ENCODE measurements at regions of chr16 and their contacts with region 1.

Region 1: GRCh38 chr16:4624015-4624826 is at the start of gene MGRN1:
- DNase-seq: peak; percentile 95
- ATAC-seq: peak; percentile 99
- total RNA-seq, gene MGRN1: 32.2 TPM

Region 2: DNA sequence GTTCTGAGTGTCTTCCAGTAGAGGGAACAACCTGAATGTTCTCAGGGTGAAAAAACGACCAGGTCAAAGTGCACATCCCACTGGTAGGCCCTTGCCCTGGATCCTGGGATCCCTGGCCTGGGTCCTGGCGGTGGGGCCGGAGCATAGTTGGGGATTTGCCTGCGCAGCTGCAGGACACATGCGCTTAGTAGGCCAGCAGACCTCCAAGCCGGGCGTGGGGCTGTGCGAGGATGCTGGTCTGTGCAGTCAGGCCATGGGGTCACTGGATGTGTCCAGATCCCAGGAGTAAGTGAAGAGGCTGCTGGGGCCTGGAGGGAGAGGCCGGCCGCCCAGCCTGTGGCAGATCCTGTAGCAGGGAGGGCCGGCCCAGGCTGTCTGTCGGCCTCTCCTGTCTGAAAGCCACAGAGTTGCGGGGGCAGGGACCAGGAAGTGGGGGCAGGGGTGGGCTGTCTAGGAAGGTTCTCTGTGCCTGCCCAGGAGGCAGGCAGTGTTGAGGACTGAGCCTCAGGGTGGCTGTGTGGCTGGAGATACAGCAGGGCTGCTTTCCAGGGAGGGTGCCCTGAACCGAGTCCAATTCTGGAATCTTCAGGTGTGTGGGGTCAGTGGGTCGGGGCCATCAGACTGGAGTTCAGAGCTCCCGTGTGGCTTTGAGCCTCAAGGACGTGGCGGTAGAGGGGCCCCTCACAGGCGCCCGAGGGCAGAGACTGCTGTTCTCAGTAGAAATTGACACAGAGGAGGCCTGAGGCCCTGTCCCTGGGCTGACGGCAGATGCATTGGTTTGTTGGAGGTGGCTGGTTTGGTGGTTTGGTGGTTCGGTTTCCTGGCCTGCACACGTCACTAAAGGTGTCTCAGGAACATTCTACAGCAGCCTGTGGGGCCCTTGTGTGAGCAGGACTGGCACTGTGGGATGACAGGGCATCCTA is 51.9 kb after region 1 on chr16:
- intact Hi-C with region 1: loop called (anchors 2 kb)
- DNase-seq: no peak
- ATAC-seq: no peak

Measured in Right ventricle myocardium inferior (tissue), 1 donor.